HAP-1 (cell line): ENCODE measurements at regions of chr12 and their contacts with region 1.

Region 1: DNA sequence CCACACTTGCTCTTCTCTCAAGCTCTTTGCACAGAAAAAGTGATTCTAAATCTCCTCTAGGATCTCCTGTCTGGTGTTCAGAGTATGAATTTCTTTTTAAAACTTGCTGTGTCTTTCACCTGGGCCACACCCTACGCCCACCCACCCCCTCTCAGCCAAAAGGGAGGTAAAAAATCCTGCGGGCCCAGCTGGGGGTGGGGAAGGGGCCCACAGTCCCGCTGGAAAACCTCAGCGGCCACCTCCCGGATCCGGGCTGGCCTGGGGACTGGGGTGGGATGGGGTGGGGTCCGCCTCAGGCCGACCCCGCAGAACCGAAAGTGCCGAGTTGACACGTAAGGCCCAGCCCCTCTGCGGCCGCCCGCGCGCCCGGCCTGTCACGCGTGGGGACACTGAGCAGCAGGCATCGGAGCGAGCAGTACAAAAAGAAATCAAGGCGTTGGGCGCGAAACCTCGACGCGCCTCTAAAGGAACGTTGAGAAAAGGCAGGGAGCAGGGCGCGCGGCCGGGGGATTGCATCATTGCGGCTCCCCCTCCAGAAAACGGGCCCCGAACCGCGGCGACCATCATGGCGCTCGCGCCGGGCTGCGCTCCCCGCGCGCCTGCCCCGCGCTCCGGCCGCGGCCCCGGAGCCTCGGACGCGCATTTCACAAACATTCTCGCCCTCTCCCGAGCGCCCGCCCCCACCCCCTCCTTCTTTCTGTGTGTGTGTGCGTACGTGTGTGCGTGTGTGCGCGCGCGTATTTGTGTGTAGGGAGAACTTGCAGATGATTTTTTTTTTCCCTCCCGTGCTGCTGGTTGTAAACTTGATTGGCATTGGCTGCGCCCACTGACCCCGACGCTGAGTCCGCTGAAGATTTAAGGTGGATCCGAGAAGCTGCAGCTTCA is 7.7 kb downstream of the CDKN1B start:
- DNase-seq: peak; percentile 95 to 97
- H3K4me3 ChIP-seq: peak overlapping the region; percentile 72
- H3K4me1 ChIP-seq: peaks cover 24% of the 10 kb centered on the region
- H3K27me3 ChIP-seq: no peaks in the 10 kb centered on the region

Region 2: DNA sequence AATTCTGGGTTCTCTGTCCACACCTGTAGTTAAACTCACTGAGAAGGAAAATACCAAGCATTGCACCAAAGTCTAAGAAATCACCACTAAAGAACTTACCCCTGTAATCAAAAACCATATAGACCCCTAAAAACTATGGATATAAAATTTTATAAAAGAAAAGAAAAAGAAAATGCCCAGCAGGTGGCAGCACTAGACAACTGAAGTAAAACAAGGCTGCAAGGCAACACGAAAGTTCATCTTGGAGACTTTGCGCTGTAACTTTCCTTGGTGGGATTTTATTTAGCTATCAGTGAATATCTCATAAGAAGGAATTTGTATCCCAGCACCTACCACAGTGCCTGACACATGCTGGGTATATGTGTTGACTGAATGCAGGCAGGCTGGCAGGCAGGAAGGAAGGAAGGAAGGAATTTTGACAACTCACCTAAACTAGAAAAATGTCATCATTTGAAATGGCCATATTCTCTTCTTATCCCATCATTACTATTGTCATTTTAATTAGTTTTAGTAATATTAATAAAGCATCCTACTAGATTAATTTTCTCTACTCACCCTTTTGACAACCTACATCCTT is 1143.6 kb before region 1 on chr12:
- in situ Hi-C with region 1: loop called (anchors 25 kb)
- DNase-seq: peak; percentile 63 to 81
- H3K4me3 ChIP-seq: no peak overlapping the region
- H3K4me1 ChIP-seq: no peaks in the 10 kb centered on the region
- H3K27me3 ChIP-seq: no peaks in the 10 kb centered on the region; the same call in none of the 2 replicates